Activated CD8-positive, alpha-beta T cell treated with anti-CD3 and anti-CD28 coated beads for 36 hours (primary cell): ENCODE measurements at regions of chr13 and their contacts with region 1.

Region 1: DNA sequence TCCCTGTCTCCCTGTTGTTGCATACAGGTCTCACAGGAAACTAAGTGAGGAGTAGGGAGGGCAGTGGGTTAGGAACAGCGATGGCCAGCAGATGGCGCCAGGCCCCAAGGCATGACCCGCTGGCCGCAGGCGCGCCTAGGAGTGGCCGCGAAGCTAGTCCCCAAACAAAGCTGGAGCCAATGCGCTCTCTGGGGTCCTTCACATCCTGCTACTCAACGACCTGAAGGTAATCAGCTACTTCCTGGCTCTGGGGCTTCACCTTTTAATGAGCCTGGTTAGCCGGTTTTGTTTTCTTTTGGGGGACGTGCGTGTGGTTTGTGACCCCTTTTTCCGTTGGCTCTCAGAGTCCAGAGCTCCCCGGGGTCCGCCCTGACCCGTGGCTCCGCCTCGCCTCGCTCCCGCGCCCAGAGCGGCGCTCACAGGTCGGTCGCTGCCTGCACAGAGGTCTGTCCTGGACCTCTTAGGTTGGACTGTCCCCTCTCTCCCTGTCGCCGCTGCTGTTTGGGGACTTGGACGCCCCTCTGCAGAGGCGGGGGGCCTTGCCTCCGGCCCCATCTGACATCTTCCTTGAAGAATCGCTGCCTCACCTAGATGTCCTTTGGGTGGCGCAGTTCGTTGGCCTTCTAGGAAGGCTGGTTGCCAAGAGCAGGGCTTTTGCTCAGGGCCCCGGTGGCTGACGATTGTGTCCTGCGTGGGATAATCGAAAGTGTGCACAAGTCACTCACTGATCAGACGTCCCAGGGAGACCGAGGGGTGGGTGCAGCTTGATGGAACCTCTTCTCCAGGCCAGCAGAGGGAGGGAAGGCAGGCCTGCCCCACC is 62.1 kb upstream of the GTF3A start:
- DNase-seq: peak; percentile 90
- ATAC-seq: peak; percentile 98
- H3K4me3 Mint-ChIP-seq: peak overlapping the region; percentile 48
- H3K27ac Mint-ChIP-seq: no peak overlapping the region
- H3K4me1 Mint-ChIP-seq: peaks cover 4% of the 10 kb centered on the region
- H3K27me3 Mint-ChIP-seq: peaks cover 7% of the 10 kb centered on the region
- CTCF ChIP-seq: peak; percentile 87

Region 2: DNA sequence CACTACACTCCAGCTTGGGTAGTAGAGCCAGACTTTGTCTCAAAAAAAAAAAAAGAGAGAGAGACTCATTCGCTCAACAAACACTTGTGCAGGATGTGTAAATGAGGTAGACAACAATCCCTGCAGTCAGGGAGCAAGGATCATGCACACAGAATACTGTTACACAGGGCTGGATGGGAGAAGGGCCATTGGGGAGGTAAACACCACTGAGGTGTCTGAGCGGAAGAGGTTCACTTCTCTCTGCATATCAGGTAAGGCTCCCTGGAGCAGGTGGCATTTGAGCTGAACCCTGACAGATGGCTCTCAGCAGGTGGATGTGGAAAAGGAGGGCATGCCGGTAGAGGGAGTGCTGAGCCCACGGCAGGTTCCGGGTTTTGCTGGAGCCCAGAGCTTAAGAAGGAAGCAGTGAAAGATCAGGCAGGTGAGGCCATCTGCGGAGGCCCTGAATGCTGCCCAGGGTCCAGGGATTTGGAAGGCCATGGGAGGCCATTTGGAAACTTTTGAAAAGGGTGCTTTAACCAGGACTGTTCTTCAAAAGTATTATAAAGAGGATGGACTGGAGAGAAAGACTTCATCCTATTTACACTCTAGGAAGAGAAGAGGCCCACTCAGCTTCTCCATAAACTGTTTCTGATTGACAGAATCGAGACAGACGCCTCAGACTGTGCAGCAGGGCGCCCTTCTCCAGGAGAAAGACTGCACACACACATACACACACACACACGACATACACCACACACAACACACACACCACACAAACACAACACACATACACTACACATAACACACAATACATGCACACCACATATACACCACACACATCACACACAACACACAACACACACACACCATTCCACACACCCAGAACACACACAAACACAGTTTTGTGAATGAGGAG is 390.0 kb before region 1 on chr13:
- CTCF ChIA-PET with region 1: interaction called, 12 read pairs
- POLR2A ChIA-PET with region 1: no interaction called
- intact Hi-C with region 1: no loop called
- DNase-seq: peak; percentile 59
- ATAC-seq: peak; percentile 80
- H3K4me3 Mint-ChIP-seq: no peak overlapping the region
- H3K27ac Mint-ChIP-seq: peak overlapping the region; percentile 25
- H3K4me1 Mint-ChIP-seq: peaks cover 4% of the 10 kb centered on the region
- H3K27me3 Mint-ChIP-seq: no peaks in the 10 kb centered on the region
- CTCF ChIP-seq: no peak

Region 3: DNA sequence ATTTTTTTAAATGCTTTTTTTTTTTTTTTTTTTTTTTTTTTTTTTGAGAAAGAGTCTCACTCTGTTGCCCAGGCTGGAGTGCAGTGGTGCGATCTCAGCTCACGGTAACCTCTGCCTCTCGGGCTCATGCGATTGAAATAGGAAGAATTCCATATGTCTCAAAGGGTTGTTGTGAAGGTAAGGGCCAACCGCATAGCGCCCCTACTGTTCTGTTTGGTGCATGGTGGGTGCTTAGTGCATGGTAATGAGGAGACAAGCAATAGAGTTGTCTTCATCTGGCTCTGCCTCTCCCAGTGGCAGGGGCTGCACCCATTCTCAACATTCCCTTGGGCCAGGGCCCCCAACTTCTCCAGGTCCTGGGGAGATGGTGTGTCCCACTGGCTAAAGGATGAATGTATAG is 23.0 kb before region 1 on chr13:
- CTCF ChIA-PET with region 1: interaction called, 21 read pairs
- POLR2A ChIA-PET with region 1: no interaction called
- intact Hi-C with region 1: no loop called
- DNase-seq: peak; percentile 70
- ATAC-seq: peak; percentile 86
- H3K4me3 Mint-ChIP-seq: no peak overlapping the region
- H3K27ac Mint-ChIP-seq: no peak overlapping the region
- H3K4me1 Mint-ChIP-seq: peaks cover 3% of the 10 kb centered on the region
- H3K27me3 Mint-ChIP-seq: no peaks in the 10 kb centered on the region
- CTCF ChIP-seq: peak; percentile 70

Region 4: DNA sequence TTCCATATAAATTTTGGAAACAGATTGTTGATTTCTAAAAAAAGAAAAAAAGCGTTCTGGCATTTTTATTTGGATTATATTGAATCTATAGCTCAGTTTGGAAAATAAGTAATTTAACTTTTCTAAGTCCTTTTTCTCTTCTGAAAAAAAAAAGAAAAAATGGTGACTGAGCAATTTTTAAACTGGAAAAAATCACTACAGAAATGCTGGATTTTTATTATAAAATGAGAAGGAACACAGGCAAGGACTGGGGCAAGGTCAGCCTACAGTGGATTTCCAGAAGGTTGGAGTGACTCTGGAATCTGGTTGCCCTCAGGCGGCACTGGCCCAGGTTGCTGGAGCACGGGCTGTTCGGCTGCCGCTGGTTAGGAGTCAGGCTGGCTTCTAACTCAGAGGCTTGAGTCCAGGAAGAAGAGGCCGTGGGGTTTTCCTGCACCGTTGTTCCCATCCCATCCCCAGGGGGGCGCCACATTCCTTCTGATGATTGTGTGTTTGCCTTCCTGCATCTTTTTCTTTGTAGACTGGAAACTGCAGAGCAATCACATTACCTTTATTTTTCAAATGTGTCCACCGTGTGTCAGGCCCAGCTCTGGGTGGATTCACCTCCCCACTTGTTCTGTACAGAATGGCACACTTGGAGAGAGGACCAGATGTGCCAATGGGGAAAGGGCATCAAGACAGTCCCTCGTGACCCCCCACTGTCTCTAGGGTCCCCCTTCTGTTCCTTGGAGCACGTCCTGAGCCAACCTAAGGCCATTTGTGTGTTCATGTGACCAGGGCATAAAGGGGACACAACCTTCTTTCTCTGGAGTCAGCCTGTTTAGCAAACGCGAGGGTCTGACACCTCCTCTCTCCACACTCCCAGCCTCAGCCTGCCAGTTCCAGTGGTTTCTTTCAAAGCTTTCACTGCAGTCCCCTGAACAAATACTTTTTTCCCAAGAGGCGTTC is 17.7 kb after region 1 on chr13:
- CTCF ChIA-PET with region 1: interaction called, 14 read pairs
- POLR2A ChIA-PET with region 1: no interaction called
- intact Hi-C with region 1: no loop called
- DNase-seq: peak; percentile 80
- ATAC-seq: peak; percentile 84
- H3K4me3 Mint-ChIP-seq: no peak overlapping the region
- H3K27ac Mint-ChIP-seq: no peak overlapping the region
- H3K4me1 Mint-ChIP-seq: no peaks in the 10 kb centered on the region
- H3K27me3 Mint-ChIP-seq: peaks cover 3% of the 10 kb centered on the region
- CTCF ChIP-seq: peak; percentile 70

Region 5: DNA sequence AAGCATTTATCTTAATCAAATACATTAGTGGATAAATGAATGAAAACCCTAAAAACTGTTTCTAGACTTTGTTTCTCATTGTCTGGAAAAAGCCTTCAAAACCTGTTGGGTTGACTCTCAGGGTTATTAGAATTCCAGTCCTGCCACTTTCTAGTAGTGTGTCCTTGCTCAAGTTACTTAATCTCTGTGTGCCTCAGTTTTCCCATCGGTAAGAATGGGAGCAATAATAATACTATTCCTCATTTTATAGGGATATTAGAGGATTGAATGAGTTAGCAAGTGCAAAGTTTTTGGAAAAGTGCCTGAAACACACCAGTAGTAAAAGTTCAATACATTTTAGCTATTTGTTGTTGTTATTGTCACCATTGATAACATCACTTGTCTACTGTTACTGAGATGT is 623.3 kb after region 1 on chr13:
- CTCF ChIA-PET with region 1: interaction called, 21 read pairs
- POLR2A ChIA-PET with region 1: no interaction called
- intact Hi-C with region 1: no loop called
- DNase-seq: no peak
- ATAC-seq: no peak
- H3K4me3 Mint-ChIP-seq: no peak overlapping the region
- H3K27ac Mint-ChIP-seq: no peak overlapping the region
- H3K4me1 Mint-ChIP-seq: no peaks in the 10 kb centered on the region
- H3K27me3 Mint-ChIP-seq: peaks cover 31% of the 10 kb centered on the region
- CTCF ChIP-seq: no peak